ENCODE measurements at regions of chr17 and their contacts with region 1.

Region 1: GRCh38 chr17:9968902-9969617 is 64.0 kb upstream of the RCVRN start:
- DNase-seq: no peak
- ATAC-seq: no peak
- H3K4me3 ChIP-seq: no peak overlapping the region
- H3K4me3 Mint-ChIP-seq: no peak overlapping the region
- H3K27ac ChIP-seq: no peak overlapping the region
- H3K27ac Mint-ChIP-seq: no peak overlapping the region
- H3K4me1 ChIP-seq: no peaks in the 10 kb centered on the region
- H3K4me1 Mint-ChIP-seq: no peaks in the 10 kb centered on the region
- H3K27me3 ChIP-seq: no peaks in the 10 kb centered on the region
- H3K27me3 Mint-ChIP-seq: no peaks in the 10 kb centered on the region
- CTCF ChIP-seq: no peak

Region 2: GRCh38 chr17:10172241-10172741 is 203.2 kb after region 1 on chr17:
- CTCF ChIA-PET with region 1: no interaction called
- POLR2A ChIA-PET with region 1: no interaction called
- intact Hi-C with region 1: no loop called
- DNase-seq: peak in 1 of 9 experiments; percentile 33
- ATAC-seq: no peak
- H3K4me3 ChIP-seq: no peak overlapping the region
- H3K4me3 Mint-ChIP-seq: peak overlapping the region; percentile 6
- H3K27ac ChIP-seq: peak overlapping the region in 1 of 2 experiments; percentile 61
- H3K27ac Mint-ChIP-seq: peak overlapping the region; percentile 55
- H3K4me1 ChIP-seq: peaks cover 12% of the 10 kb centered on the region
- H3K4me1 Mint-ChIP-seq: peaks cover 22% of the 10 kb centered on the region
- H3K27me3 ChIP-seq: no peaks in the 10 kb centered on the region
- H3K27me3 Mint-ChIP-seq: peaks cover 15% of the 10 kb centered on the region
- CTCF ChIP-seq: no peak

Region 3: GRCh38 chr17:10357768-10358167 is 388.7 kb after region 1 on chr17:
- CTCF ChIA-PET with region 1: interaction called, 3 read pairs
- POLR2A ChIA-PET with region 1: no interaction called
- intact Hi-C with region 1: loop called in 1 of 2 experiments (anchors 5 kb)
- DNase-seq: peak in 4 of 9 experiments; percentile 19 to 47 (median 28)
- ATAC-seq: no peak
- H3K4me3 ChIP-seq: no peak overlapping the region
- H3K4me3 Mint-ChIP-seq: no peak overlapping the region
- H3K27ac ChIP-seq: no peak overlapping the region
- H3K27ac Mint-ChIP-seq: no peak overlapping the region
- H3K4me1 ChIP-seq: no peaks in the 10 kb centered on the region
- H3K4me1 Mint-ChIP-seq: no peaks in the 10 kb centered on the region
- H3K27me3 ChIP-seq: peaks cover 0 to 4% of the 10 kb centered on the region in 2 experiments
- H3K27me3 Mint-ChIP-seq: peaks cover 11% of the 10 kb centered on the region
- CTCF ChIP-seq: peak; percentile 33

Measured in CD8-positive, alpha-beta T cell (primary cell).